ENCODE measurements at regions of chr3 and their contacts with region 1.

Region 1: DNA sequence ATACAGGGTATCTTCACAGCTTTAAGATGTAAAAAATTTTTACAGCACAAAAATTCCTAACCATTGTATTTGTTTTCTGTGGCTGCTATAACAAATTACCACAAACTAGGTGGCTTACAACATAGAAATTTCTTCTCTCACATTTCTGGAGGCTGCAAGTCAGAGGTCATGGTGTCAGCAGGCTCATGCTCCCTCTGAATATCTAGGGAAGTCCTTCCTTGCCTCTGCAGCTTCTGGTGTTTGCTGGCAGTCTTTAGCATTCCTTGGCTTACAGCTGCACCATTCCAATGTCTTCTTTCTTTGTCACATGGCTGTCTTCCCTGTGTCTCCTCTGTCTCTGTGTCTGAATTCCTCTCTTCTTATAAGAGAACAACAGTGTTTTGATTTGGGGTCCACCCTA is 310.2 kb upstream of the SUCLG2 start:
- DNase-seq: no peak
- ATAC-seq: no peak
- H3K4me3 ChIP-seq: no peak overlapping the region
- H3K4me3 Mint-ChIP-seq: no peak overlapping the region
- H3K27ac ChIP-seq: no peak overlapping the region
- H3K27ac Mint-ChIP-seq: no peak overlapping the region
- H3K4me1 ChIP-seq: no peaks in the 10 kb centered on the region
- H3K4me1 Mint-ChIP-seq: no peaks in the 10 kb centered on the region
- H3K27me3 ChIP-seq: no peaks in the 10 kb centered on the region
- H3K27me3 Mint-ChIP-seq: no peaks in the 10 kb centered on the region
- CTCF ChIP-seq: no peak

Region 2: DNA sequence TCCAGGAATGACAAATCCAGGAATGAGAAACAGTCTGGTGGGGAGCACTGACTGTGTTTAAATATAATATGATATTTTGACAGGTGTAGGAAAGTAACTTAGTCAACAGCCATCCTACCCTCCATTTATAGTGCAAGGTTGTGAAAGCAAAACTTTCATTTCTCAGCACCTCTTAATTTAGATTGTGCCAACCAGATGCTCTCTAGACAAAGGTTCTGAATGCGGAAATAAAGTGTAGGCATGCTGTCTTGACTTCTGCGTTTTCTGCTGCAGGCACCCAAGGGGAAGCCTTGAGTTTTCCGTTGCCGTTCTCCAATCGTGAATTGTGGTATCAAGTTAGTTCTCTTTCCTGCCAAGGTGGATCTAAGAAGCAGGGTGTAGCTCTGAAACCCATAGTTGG is 48.2 kb before region 1 on chr3:
- CTCF ChIA-PET with region 1: no interaction called
- POLR2A ChIA-PET with region 1: no interaction called
- intact Hi-C with region 1: loop called in 1 of 2 experiments (anchors 10 kb)
- DNase-seq: no peak
- ATAC-seq: no peak
- H3K4me3 ChIP-seq: no peak overlapping the region
- H3K4me3 Mint-ChIP-seq: no peak overlapping the region
- H3K27ac ChIP-seq: no peak overlapping the region
- H3K27ac Mint-ChIP-seq: no peak overlapping the region
- H3K4me1 ChIP-seq: no peaks in the 10 kb centered on the region
- H3K4me1 Mint-ChIP-seq: no peaks in the 10 kb centered on the region
- H3K27me3 ChIP-seq: no peaks in the 10 kb centered on the region
- H3K27me3 Mint-ChIP-seq: no peaks in the 10 kb centered on the region
- CTCF ChIP-seq: no peak

Measured in CD4-positive, alpha-beta T cell (primary cell).